T-cell (primary cell): ENCODE measurements at regions of chr17 and their contacts with region 1.

Region 1: DNA sequence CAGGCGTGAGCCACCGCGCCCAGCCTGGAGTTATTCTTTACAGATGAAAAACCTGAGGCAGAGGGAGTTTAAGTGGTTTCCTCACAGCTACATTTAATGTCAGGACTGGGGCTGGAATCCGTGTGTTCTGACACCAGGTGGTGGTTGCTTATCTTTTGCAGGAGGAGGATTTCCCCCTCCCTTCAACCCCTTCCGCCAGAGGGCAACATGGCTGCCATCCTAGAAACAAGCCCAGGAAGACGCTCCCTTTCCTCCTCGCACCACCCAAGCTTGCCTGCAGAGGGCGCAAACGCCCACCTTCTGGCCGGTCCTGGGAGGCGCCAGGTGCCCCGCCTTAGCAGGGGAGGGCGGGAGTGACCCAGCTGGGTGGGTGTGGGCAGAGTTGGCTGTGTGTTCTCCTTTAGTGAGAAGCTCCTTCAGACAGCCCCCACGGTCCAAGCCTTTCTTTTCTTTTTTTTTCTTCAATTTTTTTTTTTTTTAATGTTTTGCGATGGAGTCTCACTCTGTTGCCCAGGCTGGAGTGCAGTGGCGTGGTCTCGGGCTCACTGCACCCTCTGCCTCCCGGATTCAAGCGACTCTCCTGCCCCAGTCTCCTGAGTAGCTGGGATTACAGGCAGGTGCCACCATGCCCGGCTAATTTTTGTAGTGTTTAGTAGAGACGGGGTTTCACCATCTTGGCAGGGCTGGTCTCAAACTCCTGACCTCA is 9.9 kb upstream of the RAP1GAP2 start:
- DNase-seq: peak; percentile 75 to 94 (median 86)
- ATAC-seq: peak; percentile 97 to 99 (median 98)
- H3K4me3 ChIP-seq: no peak overlapping the region
- H3K4me3 Mint-ChIP-seq: no peak overlapping the region
- H3K27ac ChIP-seq: no peak overlapping the region
- H3K27ac Mint-ChIP-seq: no peak overlapping the region
- H3K4me1 ChIP-seq: peaks cover 5 to 25% of the 10 kb centered on the region in 2 experiments
- H3K4me1 Mint-ChIP-seq: peaks cover 6 to 24% (median 14%) of the 10 kb centered on the region in 3 donors
- H3K27me3 ChIP-seq: peaks cover 0 to 6% of the 10 kb centered on the region in 2 experiments
- H3K27me3 Mint-ChIP-seq: no peaks in the 10 kb centered on the region

Region 2: GRCh38 chr17:2303204-2304188 is 482.8 kb before region 1 on chr17 and contains the starts of genes SMG6 and SRR:
- CTCF ChIA-PET with region 1: interaction called in 1 of 2 experiments, 11 read pairs
- POLR2A ChIA-PET with region 1: no interaction called
- DNase-seq: peak; percentile 87 to 97 (median 95)
- ATAC-seq: peak; percentile 84 to 93 (median 86)
- H3K4me3 ChIP-seq: peak within 1 kb of the TSS; percentile 79 to 90
- H3K4me3 Mint-ChIP-seq: peak within 1 kb of the TSS; percentile 85 to 92 (median 88)
- H3K27ac ChIP-seq: peak within 1 kb of the TSS; percentile 58
- H3K27ac Mint-ChIP-seq: peak within 1 kb of the TSS; percentile 75 to 86
- H3K4me1 ChIP-seq: peaks cover 7 to 29% of the 10 kb centered on the region in 2 experiments
- H3K4me1 Mint-ChIP-seq: peaks cover 42 to 54% (median 46%) of the 10 kb centered on the region in 3 donors
- H3K27me3 ChIP-seq: no peaks in the 10 kb centered on the region
- H3K27me3 Mint-ChIP-seq: no peaks in the 10 kb centered on the region
- total RNA-seq, gene SMG6: 42.7 to 55.4 (median 45.9) TPM
- total RNA-seq, gene SRR: 3.5 to 8.8 (median 5.2) TPM

Region 3: GRCh38 chr17:2796164-2797125 is 10.1 kb after region 1 on chr17 and contains the start of gene RAP1GAP2:
- CTCF ChIA-PET with region 1: interaction called in 1 of 2 experiments, 19 read pairs
- POLR2A ChIA-PET with region 1: no interaction called
- DNase-seq: peak in 34 of 35 experiments; percentile 51 to 86 (median 78)
- ATAC-seq: peak; percentile 86 to 91 (median 89)
- H3K4me3 ChIP-seq: peak within 1 kb of the TSS; percentile 79 to 85
- H3K4me3 Mint-ChIP-seq: peak within 1 kb of the TSS; percentile 76 to 90 (median 81)
- H3K27ac ChIP-seq: no peak within 1 kb of the TSS
- H3K27ac Mint-ChIP-seq: peak within 1 kb of the TSS; percentile 71 to 84
- H3K4me1 ChIP-seq: peaks cover 34 to 90% of the 10 kb centered on the region in 2 experiments
- H3K4me1 Mint-ChIP-seq: peaks cover 78 to 88% (median 82%) of the 10 kb centered on the region in 3 donors
- H3K27me3 ChIP-seq: peaks cover 0 to 6% of the 10 kb centered on the region in 2 experiments
- H3K27me3 Mint-ChIP-seq: no peaks in the 10 kb centered on the region
- total RNA-seq, gene RAP1GAP2: 8.0 to 77.7 (median 13.3) TPM

Region 4: GRCh38 chr17:2837147-2837561 is 50.8 kb after region 1 on chr17:
- CTCF ChIA-PET with region 1: interaction called, 7 to 10 read pairs
- POLR2A ChIA-PET with region 1: no interaction called
- DNase-seq: peak in 31 of 35 experiments; percentile 12 to 70 (median 41)
- ATAC-seq: peak; percentile 66 to 100 (median 91)
- H3K4me3 ChIP-seq: no peak overlapping the region
- H3K4me3 Mint-ChIP-seq: no peak overlapping the region
- H3K27ac ChIP-seq: no peak overlapping the region
- H3K27ac Mint-ChIP-seq: no peak overlapping the region
- H3K4me1 ChIP-seq: peaks cover 0 to 14% of the 10 kb centered on the region in 2 experiments
- H3K4me1 Mint-ChIP-seq: peaks cover 11 to 15% (median 13%) of the 10 kb centered on the region in 3 donors
- H3K27me3 ChIP-seq: no peaks in the 10 kb centered on the region
- H3K27me3 Mint-ChIP-seq: no peaks in the 10 kb centered on the region

Region 5: GRCh38 chr17:3197219-3197618 is 410.9 kb after region 1 on chr17 and contains the start of gene OR1A2:
- CTCF ChIA-PET with region 1: no interaction called
- POLR2A ChIA-PET with region 1: no interaction called
- DNase-seq: no peak
- ATAC-seq: no peak
- H3K4me3 ChIP-seq: no peak within 1 kb of the TSS
- H3K4me3 Mint-ChIP-seq: no peak within 1 kb of the TSS
- H3K27ac ChIP-seq: no peak within 1 kb of the TSS
- H3K27ac Mint-ChIP-seq: no peak within 1 kb of the TSS
- H3K4me1 ChIP-seq: no peaks in the 10 kb centered on the region
- H3K4me1 Mint-ChIP-seq: no peaks in the 10 kb centered on the region
- H3K27me3 ChIP-seq: peaks cover 0 to 2% of the 10 kb centered on the region in 2 experiments
- H3K27me3 Mint-ChIP-seq: peaks cover 25 to 29% of the 10 kb centered on the region in 2 donors
- total RNA-seq, gene OR1A2: not detected